WTC11 (cell line): ENCODE measurements at regions of chr2 and their contacts with region 1.

Region 1: GRCh38 chr2:230847883-230848388 is 16.8 kb upstream of the ITM2C start:
- DNase-seq: peak; percentile 97
- ATAC-seq: peak; percentile 79
- H3K4me3 Mint-ChIP-seq: no peak overlapping the region
- H3K27ac Mint-ChIP-seq: no peak overlapping the region
- H3K4me1 Mint-ChIP-seq: peaks cover 17% of the 10 kb centered on the region
- H3K27me3 Mint-ChIP-seq: peaks cover 25% of the 10 kb centered on the region
- CTCF ChIP-seq: peak; percentile 96

Region 2: DNA sequence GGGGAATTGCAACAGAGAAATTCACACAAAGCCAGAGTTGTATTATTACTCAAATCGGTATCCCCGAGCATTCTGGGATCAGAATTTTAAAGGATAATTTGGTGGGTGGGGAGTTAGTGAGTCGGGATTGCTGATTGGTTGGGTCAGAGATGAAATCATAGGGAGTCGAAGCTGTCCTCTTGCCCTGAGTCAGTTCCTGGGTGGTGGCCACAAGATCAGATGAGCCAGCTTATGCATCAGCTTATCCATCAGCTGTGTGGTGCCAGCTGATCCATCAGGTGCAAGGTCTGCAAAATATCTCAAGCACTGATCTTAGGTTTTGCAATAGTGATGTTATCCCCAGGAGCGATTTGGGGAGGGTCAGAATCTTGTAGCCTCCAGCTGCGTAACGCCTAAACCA is 17.5 kb before region 1 on chr2:
- CTCF ChIA-PET with region 1: interaction called, 10 read pairs
- POLR2A ChIA-PET with region 1: no interaction called
- DNase-seq: no peak
- ATAC-seq: no peak
- H3K4me3 Mint-ChIP-seq: no peak overlapping the region
- H3K27ac Mint-ChIP-seq: no peak overlapping the region
- H3K4me1 Mint-ChIP-seq: no peaks in the 10 kb centered on the region
- H3K27me3 Mint-ChIP-seq: peaks cover 5% of the 10 kb centered on the region; the same call in 1 of the 2 replicates
- CTCF ChIP-seq: no peak

Region 3: DNA sequence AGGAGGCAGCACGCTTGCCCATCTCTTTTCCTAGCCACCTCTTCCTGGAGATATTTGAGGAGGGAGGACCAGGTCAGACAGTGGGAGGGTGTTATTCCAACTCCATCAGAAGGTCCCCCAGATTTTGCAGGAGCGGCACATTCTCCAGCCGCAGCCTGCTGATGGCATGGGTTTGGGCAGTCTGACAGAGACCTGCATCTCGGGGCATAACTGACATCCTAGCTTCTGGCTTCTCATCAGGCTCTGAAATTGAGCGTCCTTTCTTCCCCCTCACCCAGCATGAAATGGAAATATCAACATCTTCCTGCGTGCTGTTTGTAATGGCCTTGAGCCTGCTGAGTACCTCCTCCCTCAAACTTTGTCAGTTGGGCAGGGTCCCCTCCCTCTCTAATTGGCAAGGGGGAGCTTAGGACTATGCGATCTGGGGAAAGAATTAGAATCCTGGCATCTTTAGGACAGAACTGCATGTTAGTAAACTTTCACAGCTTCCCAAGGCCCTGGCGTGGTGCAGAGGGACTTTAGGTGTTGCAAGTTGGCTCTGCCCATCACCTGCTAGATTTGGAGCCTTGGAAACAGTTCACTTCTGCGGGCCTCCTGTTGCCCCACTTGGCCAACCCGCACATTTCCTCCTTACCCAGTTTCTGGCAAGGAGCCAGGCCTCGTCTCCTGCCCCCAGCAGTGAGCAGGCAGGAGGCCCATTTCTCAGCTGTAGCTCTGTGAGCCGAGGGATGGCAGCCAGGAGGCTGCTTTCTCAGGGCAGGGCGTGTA is 19.0 kb after region 1 on chr2:
- CTCF ChIA-PET with region 1: interaction called, 40 read pairs
- POLR2A ChIA-PET with region 1: no interaction called
- DNase-seq: no peak
- ATAC-seq: no peak
- H3K4me3 Mint-ChIP-seq: peak overlapping the region; percentile 88
- H3K27ac Mint-ChIP-seq: peak overlapping the region; percentile 96
- H3K4me1 Mint-ChIP-seq: peaks cover 76% of the 10 kb centered on the region
- H3K27me3 Mint-ChIP-seq: no peaks in the 10 kb centered on the region; the same call in 1 of the 2 replicates
- CTCF ChIP-seq: no peak

Region 4: DNA sequence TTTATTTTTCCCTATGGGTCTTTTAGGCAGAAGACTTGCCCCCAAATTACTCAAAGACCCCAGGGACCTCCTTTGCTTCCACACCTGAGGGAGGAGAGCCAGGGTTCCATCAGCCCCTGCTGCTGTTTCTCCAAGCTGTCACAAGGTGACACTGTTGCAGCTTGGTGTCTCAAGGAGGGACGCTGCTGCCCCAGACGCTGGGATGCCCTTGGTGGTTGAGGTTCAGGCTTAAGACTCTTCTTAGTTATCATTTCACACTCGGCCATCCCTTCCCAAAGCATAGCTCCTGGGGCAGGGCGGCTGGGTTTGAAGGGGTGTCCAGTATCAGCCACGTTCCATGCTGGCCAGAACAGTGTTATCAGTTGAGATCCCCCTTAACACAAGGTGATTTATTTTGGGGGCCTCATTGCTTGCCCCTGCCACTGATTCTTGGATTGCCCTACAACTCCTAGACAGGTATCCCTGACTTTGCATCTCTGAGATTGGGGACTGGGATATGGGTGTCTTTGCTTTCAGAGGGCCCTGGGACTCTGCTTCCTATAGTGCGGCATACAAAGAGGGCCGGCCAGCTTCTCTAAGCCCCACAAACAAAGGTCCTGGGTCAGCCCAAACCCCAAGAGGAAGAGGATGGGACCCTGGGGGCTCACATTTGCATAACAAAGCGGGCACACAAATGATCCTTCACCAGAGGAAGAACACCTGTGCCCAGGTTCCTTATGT is 54.4 kb after region 1 on chr2:
- CTCF ChIA-PET with region 1: interaction called, 10 read pairs
- POLR2A ChIA-PET with region 1: no interaction called
- DNase-seq: peak; percentile 78
- ATAC-seq: peak; percentile 83
- H3K4me3 Mint-ChIP-seq: peak overlapping the region; percentile 42
- H3K27ac Mint-ChIP-seq: peak overlapping the region; percentile 71
- H3K4me1 Mint-ChIP-seq: peaks cover 60% of the 10 kb centered on the region
- H3K27me3 Mint-ChIP-seq: peaks cover 26% of the 10 kb centered on the region
- CTCF ChIP-seq: peak; percentile 71